H1 (cell line): ENCODE measurements at regions of chr1 and their contacts with region 1.

Region 1: GRCh38 chr1:78004719-78005447 is at the start of gene DNAJB4:
- DNase-seq: no peak
- H3K4me3 ChIP-seq: peak within 1 kb of the TSS in 3 of 4 experiments; percentile 11 to 53 (median 34); a peak in 4 of 8 replicates
- H3K27ac ChIP-seq: peak within 1 kb of the TSS; percentile 69; the same call in 1 of the 2 replicates
- H3K4me1 ChIP-seq: peaks cover 0 to 5% (median 3%) of the 10 kb centered on the region in 4 experiments; a peak in 3 of 7 replicates
- H3K27me3 ChIP-seq: no peaks in the 10 kb centered on the region
- CTCF ChIP-seq: no peak
- EP300 ChIP-seq: no peak
- POLR2A ChIP-seq: no peak
- RAD21 ChIP-seq: no peak
- total RNA-seq, gene DNAJB4: 20.2 and 21.8 TPM in 2 replicates

Region 2: DNA sequence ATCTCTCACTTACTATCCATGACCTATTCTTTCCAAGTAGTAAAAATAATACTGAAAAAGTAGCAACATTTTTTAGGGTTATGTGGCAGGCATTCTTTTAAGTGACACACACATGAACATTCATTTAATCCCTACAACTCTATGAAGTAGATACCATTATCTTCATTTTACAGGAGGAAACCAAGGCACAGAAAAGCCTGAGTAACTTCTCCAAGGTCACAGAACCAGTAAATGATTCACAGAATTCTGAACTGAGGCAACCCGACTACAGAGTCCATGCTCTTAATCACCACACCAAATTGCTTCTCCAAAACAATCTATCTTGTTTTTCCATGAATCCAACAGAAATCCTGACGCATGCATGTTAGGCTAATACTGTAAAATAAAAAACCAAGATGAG is 43.5 kb before region 1 on chr1:
- CTCF ChIA-PET with region 1: no interaction called
- POLR2A ChIA-PET with region 1: no interaction called
- DNase-seq: no peak
- H3K4me3 ChIP-seq: no peak overlapping the region
- H3K27ac ChIP-seq: no peak overlapping the region
- H3K4me1 ChIP-seq: no peaks in the 10 kb centered on the region
- H3K27me3 ChIP-seq: no peaks in the 10 kb centered on the region
- CTCF ChIP-seq: no peak
- EP300 ChIP-seq: no peak
- POLR2A ChIP-seq: no peak
- RAD21 ChIP-seq: no peak

Region 3: DNA sequence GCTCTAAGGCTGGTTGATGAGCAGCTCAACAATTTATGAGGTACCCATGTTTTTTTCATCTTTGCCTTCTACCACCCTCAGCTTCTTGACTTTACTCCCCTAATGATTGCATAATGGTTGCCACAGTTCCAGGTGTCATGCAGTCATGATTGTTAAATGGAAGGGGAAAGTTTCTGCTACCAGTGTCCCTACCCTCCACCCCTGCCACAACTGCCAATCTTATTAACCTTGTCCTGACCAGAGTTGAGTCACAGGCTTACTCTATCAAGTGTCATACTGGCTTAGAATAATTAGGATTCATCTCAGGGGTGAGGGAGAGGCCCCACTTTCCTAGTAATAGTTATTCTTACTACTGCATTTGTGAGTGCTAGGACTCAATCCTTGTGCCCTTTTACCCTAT is 18.1 kb before region 1 on chr1:
- CTCF ChIA-PET with region 1: interaction called, 6 read pairs
- POLR2A ChIA-PET with region 1: interaction called, 180 read pairs
- DNase-seq: no peak
- H3K4me3 ChIP-seq: no peak overlapping the region
- H3K27ac ChIP-seq: no peak overlapping the region
- H3K4me1 ChIP-seq: peaks cover 0 to 6% (median 0%) of the 10 kb centered on the region in 4 experiments; a peak in 1 of 7 replicates
- H3K27me3 ChIP-seq: no peaks in the 10 kb centered on the region
- CTCF ChIP-seq: no peak
- EP300 ChIP-seq: no peak
- POLR2A ChIP-seq: no peak
- RAD21 ChIP-seq: no peak

Region 4: GRCh38 chr1:77994117-77994705 is 10.7 kb before region 1 on chr1:
- CTCF ChIA-PET with region 1: interaction called, 6 read pairs
- POLR2A ChIA-PET with region 1: interaction called, 43 read pairs
- DNase-seq: no peak
- H3K4me3 ChIP-seq: no peak overlapping the region
- H3K27ac ChIP-seq: no peak overlapping the region
- H3K4me1 ChIP-seq: no peaks in the 10 kb centered on the region
- H3K27me3 ChIP-seq: no peaks in the 10 kb centered on the region
- CTCF ChIP-seq: no peak
- EP300 ChIP-seq: no peak
- POLR2A ChIP-seq: no peak
- RAD21 ChIP-seq: no peak

Region 5: GRCh38 chr1:78015148-78015547 is 10.3 kb after region 1 on chr1:
- CTCF ChIA-PET with region 1: interaction called, 3 read pairs
- POLR2A ChIA-PET with region 1: interaction called, 12 read pairs
- DNase-seq: no peak
- H3K4me3 ChIP-seq: no peak overlapping the region
- H3K27ac ChIP-seq: no peak overlapping the region
- H3K4me1 ChIP-seq: 0 out of 7 replicates have a peak, but pooled peaks cover 0 to 2% (median 0%) of the 10 kb centered on the region in 4 experiments
- H3K27me3 ChIP-seq: no peaks in the 10 kb centered on the region
- CTCF ChIP-seq: no peak
- EP300 ChIP-seq: no peak
- POLR2A ChIP-seq: no peak
- RAD21 ChIP-seq: no peak

Region 6: DNA sequence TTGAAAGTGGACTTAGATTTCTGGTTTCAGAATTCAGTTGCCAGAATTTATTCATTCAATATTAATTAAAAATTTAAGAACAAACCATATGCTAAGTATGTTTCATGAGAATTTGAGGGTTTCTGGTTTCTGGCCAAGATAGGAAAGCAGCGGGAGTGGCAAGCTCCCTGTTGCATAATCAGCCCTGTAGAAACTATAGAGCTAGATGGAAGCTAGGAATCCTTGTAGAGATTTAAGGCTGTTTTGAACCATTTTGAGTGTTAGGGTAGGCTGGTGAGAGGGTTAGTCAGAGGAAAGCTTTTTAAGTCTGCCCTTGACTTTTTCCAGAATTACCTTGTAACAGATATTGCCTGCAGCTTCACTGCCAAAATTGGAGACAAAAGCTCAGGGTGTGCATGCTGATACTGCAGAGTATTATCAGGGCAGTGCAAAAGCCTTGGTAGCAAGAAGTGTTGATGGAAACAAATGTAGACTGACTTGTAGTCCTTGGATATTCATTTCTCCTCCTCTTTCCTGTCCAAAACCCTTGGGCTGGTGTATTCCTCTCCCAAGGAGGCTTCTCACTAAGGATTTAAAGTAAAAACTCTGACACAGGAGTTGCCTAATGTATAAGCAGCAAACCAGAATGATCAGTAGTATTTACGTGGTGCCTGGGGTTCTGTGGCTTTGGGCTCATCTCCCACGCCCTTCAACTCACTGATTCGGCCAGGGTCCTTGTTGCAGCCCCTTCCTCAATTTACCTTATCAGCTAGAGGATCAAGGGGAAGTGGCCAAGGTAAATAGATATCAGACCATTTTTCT is 28.3 kb after region 1 on chr1:
- CTCF ChIA-PET with region 1: no interaction called
- POLR2A ChIA-PET with region 1: interaction called, 10 read pairs
- DNase-seq: no peak
- H3K4me3 ChIP-seq: no peak overlapping the region
- H3K27ac ChIP-seq: no peak overlapping the region
- H3K4me1 ChIP-seq: no peaks in the 10 kb centered on the region
- H3K27me3 ChIP-seq: no peaks in the 10 kb centered on the region
- CTCF ChIP-seq: no peak
- EP300 ChIP-seq: no peak
- POLR2A ChIP-seq: no peak
- RAD21 ChIP-seq: no peak

Region 7: GRCh38 chr1:78045926-78046778 is 41.3 kb after region 1 on chr1 and contains the start of gene GIPC2:
- CTCF ChIA-PET with region 1: no interaction called
- POLR2A ChIA-PET with region 1: interaction called, 25 read pairs
- DNase-seq: peak in 1 of 2 experiments; percentile 76
- H3K4me3 ChIP-seq: peak within 1 kb of the TSS; percentile 62 to 73 (median 70)
- H3K27ac ChIP-seq: no peak within 1 kb of the TSS
- H3K4me1 ChIP-seq: peaks cover 0 to 9% (median 6%) of the 10 kb centered on the region in 4 experiments; a peak in 3 of 7 replicates
- H3K27me3 ChIP-seq: peaks cover 4 to 28% (median 24%) of the 10 kb centered on the region in 4 experiments
- CTCF ChIP-seq: no peak
- EP300 ChIP-seq: no peak
- POLR2A ChIP-seq: peak in 1 of 2 experiments; percentile 63; a peak in 2 of 3 replicates
- RAD21 ChIP-seq: no peak
- total RNA-seq, gene GIPC2: 0.69 and 1.9 TPM in 2 replicates

Region 8: GRCh38 chr1:78114034-78114956 is 109.4 kb after region 1 on chr1:
- CTCF ChIA-PET with region 1: interaction called, 15 read pairs
- POLR2A ChIA-PET with region 1: interaction called, 12 read pairs
- DNase-seq: no peak
- H3K4me3 ChIP-seq: no peak overlapping the region
- H3K27ac ChIP-seq: no peak overlapping the region
- H3K4me1 ChIP-seq: no peaks in the 10 kb centered on the region
- H3K27me3 ChIP-seq: peaks cover 0 to 3% (median 0%) of the 10 kb centered on the region in 4 experiments; a peak in 1 of 7 replicates
- CTCF ChIP-seq: peak in 2 of 3 experiments; percentile 68 to 100; a peak in 3 of 4 replicates
- EP300 ChIP-seq: no peak
- POLR2A ChIP-seq: no peak
- RAD21 ChIP-seq: peak; percentile 93 to 95